HepG2 (cell line): ENCODE measurements at regions of chr2 and their contacts with region 1.

Region 1: DNA sequence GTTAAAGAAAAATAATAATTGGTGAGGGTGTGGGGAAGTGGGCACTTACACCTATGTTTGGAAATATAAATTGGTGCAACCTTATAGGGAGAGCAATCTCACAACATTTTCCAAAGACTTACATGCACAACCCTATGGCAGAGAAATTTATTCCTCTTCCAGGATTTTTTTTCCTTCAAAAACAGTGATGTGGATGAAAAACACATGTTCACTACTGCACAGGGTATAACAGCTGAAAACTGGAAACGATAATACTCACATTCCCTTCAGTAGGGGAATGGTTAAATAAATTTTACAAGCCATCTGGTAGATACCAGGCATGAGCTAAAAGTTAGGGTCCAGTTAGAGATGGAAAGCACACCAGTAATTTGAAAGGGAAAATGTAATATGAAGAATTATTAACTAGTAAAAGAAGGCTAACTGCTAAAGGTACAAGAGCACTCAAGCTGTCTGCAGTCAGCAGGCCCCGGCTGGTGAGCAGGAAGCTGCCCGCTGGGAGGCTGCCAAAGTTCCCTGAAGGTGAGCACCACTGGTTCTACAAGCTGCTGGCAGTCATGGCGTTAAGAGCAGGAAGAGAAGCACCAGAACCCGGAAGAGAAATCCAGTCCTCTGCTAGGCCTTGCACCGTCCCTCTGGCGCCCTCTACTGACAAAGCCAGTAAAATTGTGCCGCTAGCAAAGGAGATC is 28.4 kb upstream of the CASP8 start:
- DNase-seq: peak; percentile 98
- ATAC-seq: peak; percentile 67
- H3K4me3 ChIP-seq: peak overlapping the region; percentile 35 to 98 (median 89); a peak in 5 of 6 replicates
- H3K27ac ChIP-seq: peak overlapping the region; percentile 78
- H3K4me1 ChIP-seq: peaks cover 36% of the 10 kb centered on the region
- H3K27me3 ChIP-seq: no peaks in the 10 kb centered on the region; a peak in 1 of 5 replicates
- CTCF ChIP-seq: peak; percentile 99
- EP300 ChIP-seq: peak in 1 of 2 experiments; percentile 62; a peak in 3 of 4 replicates
- POLR2A ChIP-seq: peak; percentile 74 to 75
- RAD21 ChIP-seq: peak; percentile 98

Region 2: DNA sequence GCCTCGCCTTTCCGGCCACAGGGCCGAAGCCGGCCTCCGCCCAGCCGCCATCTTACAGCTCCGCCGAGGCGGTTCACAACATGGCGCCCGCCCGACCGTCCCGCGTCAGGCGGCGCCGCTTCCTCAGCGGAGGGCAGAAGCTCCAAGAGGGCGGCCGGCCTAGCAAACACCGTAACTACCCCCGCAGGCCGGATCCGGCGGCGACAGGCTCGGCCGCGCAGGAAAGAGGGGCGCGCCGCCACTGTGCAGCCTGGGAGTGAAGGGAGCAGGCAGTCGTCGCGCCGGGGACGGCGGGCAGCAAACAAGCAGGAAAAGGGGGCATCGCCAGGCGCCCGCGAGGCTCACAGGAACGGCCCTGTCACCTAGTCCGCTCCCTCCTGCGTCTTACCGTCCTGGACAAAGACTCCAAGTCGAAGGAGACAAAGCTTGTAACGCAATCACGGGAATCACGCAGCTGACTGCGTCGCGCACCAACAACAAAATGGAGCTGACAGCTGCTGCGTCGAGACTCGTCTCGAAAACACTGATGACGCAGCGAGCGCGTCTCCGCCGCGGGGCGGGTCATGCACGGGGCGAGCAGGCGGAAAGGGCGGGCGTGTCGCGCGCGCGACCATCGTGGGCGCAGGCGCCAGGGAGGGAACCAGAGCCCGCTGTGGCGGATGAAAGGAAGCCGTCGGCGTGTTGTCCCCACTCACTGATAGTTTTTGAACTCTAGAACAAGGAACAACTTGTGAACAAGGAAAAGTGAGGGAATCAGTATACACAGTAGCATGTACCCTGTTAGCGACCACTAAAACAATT is 367.5 kb before region 1 on chr2 and contains the start of gene CLK1:
- CTCF ChIA-PET with region 1: no interaction called
- POLR2A ChIA-PET with region 1: interaction called, 17 read pairs
- in situ Hi-C with region 1: no loop called
- intact Hi-C with region 1: no loop called
- DNase-seq: peak; percentile 89
- ATAC-seq: peak; percentile 80
- H3K4me3 ChIP-seq: peak within 1 kb of the TSS; percentile 91 to 99 (median 97)
- H3K27ac ChIP-seq: peak within 1 kb of the TSS; percentile 98
- H3K4me1 ChIP-seq: peaks cover 55% of the 10 kb centered on the region
- H3K27me3 ChIP-seq: no peaks in the 10 kb centered on the region; a peak in 1 of 5 replicates
- CTCF ChIP-seq: no peak; the same call in 1 of the 2 replicates
- EP300 ChIP-seq: peak; percentile 27 to 54; a peak in 2 of 4 replicates
- POLR2A ChIP-seq: peak; percentile 99 to 100
- RAD21 ChIP-seq: peak; percentile 54
- total RNA-seq, gene CLK1: 35.2 and 66.6 TPM in 2 replicates

Region 3: DNA sequence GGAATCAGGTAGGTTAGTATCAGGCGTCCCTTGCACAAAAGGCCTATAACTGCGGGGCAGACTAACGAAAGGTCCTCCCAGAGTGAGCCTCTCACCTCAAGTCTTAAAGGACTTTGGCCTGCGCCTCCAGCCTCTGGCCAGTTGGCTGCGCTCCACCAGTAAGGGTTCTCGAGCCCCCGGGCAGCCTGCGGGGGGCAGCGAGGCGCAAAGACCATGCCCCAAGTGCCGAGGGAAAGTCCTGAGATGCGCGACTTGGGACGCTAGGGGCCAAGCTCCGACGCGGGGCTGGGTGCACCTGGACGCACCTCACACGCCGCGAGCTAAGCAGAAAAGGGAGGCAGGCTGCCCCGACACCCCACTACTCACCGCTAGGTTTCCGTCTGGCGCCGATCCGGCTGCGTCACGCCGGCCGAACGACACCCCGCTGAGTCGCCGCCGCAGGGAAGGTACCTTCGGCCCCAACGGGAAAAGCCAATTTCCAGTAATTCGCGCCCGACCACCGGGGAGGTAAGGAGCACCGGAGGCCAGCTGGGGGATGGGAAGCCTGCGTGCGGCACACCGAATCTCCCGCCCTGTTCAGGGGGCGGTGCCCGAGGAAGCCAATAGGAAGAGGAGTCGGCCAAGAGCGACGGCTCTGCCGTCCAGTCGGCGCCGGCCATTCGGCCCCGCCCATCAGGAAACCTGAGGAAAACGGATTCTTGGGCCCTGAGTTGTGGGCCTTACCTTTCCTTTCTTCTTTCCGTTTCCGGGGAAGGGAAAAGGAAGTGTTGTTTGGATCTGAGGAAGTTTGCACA is 268.6 kb before region 1 on chr2 and contains the start of gene ORC2:
- CTCF ChIA-PET with region 1: no interaction called
- POLR2A ChIA-PET with region 1: interaction called, 17 read pairs
- in situ Hi-C with region 1: no loop called
- intact Hi-C with region 1: no loop called
- DNase-seq: peak; percentile 96
- ATAC-seq: peak; percentile 96
- H3K4me3 ChIP-seq: peak within 1 kb of the TSS; percentile 79 to 96 (median 86)
- H3K27ac ChIP-seq: peak within 1 kb of the TSS; percentile 85
- H3K4me1 ChIP-seq: peaks cover 52% of the 10 kb centered on the region
- H3K27me3 ChIP-seq: no peaks in the 10 kb centered on the region; a peak in 1 of 5 replicates
- CTCF ChIP-seq: peak; percentile 92
- EP300 ChIP-seq: peak in 1 of 2 experiments; percentile 30; a peak in 2 of 4 replicates
- POLR2A ChIP-seq: peak; percentile 74 to 85
- RAD21 ChIP-seq: peak; percentile 77
- total RNA-seq, gene ORC2: 58.3 and 73.5 TPM in 2 replicates

Region 4: GRCh38 chr2:201182650-201183364 is 49.1 kb before region 1 on chr2 and contains the start of gene CASP10:
- CTCF ChIA-PET with region 1: interaction called, 45 read pairs
- POLR2A ChIA-PET with region 1: interaction called, 138 read pairs
- in situ Hi-C with region 1: loop called (anchors 5 kb)
- intact Hi-C with region 1: loop called (anchors 1 kb)
- DNase-seq: peak; percentile 94
- ATAC-seq: peak; percentile 84
- H3K4me3 ChIP-seq: peak within 1 kb of the TSS; percentile 68 to 95 (median 74)
- H3K27ac ChIP-seq: peak within 1 kb of the TSS; percentile 74
- H3K4me1 ChIP-seq: peaks cover 68% of the 10 kb centered on the region
- H3K27me3 ChIP-seq: no peaks in the 10 kb centered on the region; a peak in 1 of 5 replicates
- CTCF ChIP-seq: peak; percentile 96
- EP300 ChIP-seq: 0 out of 4 replicates have a peak, but pooled peaks of 1 of the 2 experiments have one; percentile 52
- POLR2A ChIP-seq: peak; percentile 70 to 88
- RAD21 ChIP-seq: peak; percentile 83
- total RNA-seq, gene CASP10: 22.2 and 31.1 TPM in 2 replicates

Region 5: GRCh38 chr2:201220102-201220570 is 11.8 kb before region 1 on chr2:
- CTCF ChIA-PET with region 1: no interaction called
- POLR2A ChIA-PET with region 1: interaction called, 21 read pairs
- in situ Hi-C with region 1: no loop called
- intact Hi-C with region 1: no loop called
- DNase-seq: no peak
- ATAC-seq: no peak
- H3K4me3 ChIP-seq: no peak overlapping the region
- H3K27ac ChIP-seq: no peak overlapping the region
- H3K4me1 ChIP-seq: peaks cover 22% of the 10 kb centered on the region
- H3K27me3 ChIP-seq: no peaks in the 10 kb centered on the region
- CTCF ChIP-seq: no peak
- EP300 ChIP-seq: no peak
- POLR2A ChIP-seq: no peak
- RAD21 ChIP-seq: no peak

Region 6: GRCh38 chr2:201327678-201328077 is 95.8 kb after region 1 on chr2:
- CTCF ChIA-PET with region 1: no interaction called
- POLR2A ChIA-PET with region 1: no interaction called
- in situ Hi-C with region 1: no loop called
- intact Hi-C with region 1: no loop called
- DNase-seq: no peak
- ATAC-seq: no peak
- H3K4me3 ChIP-seq: no peak overlapping the region
- H3K27ac ChIP-seq: no peak overlapping the region
- H3K4me1 ChIP-seq: no peaks in the 10 kb centered on the region
- H3K27me3 ChIP-seq: peaks cover 0 to 3% of the 10 kb centered on the region in 2 experiments; a peak in 3 of 5 replicates
- CTCF ChIP-seq: no peak
- EP300 ChIP-seq: no peak
- POLR2A ChIP-seq: no peak
- RAD21 ChIP-seq: no peak

Region 7: GRCh38 chr2:201451292-201452057 is 219.6 kb after region 1 on chr2 and contains the starts of genes STRADB and TRAK2:
- CTCF ChIA-PET with region 1: no interaction called
- POLR2A ChIA-PET with region 1: interaction called, 20 read pairs
- in situ Hi-C with region 1: no loop called
- intact Hi-C with region 1: loop called (anchors 5 kb)
- DNase-seq: peak; percentile 95
- ATAC-seq: peak; percentile 93
- H3K4me3 ChIP-seq: peak within 1 kb of the TSS; percentile 87 to 100 (median 99)
- H3K27ac ChIP-seq: peak within 1 kb of the TSS; percentile 81
- H3K4me1 ChIP-seq: peaks cover 72% of the 10 kb centered on the region
- H3K27me3 ChIP-seq: no peaks in the 10 kb centered on the region; a peak in 2 of 5 replicates
- CTCF ChIP-seq: peak; percentile 41
- EP300 ChIP-seq: peak; percentile 46 to 55; a peak in 1 of 4 replicates
- POLR2A ChIP-seq: peak; percentile 94 to 97
- RAD21 ChIP-seq: peak; percentile 65; the same call in 1 of the 2 replicates
- total RNA-seq, gene STRADB: 66.6 and 73.8 TPM in 2 replicates
- total RNA-seq, gene TRAK2: 21.0 and 32.4 TPM in 2 replicates

Region 8: DNA sequence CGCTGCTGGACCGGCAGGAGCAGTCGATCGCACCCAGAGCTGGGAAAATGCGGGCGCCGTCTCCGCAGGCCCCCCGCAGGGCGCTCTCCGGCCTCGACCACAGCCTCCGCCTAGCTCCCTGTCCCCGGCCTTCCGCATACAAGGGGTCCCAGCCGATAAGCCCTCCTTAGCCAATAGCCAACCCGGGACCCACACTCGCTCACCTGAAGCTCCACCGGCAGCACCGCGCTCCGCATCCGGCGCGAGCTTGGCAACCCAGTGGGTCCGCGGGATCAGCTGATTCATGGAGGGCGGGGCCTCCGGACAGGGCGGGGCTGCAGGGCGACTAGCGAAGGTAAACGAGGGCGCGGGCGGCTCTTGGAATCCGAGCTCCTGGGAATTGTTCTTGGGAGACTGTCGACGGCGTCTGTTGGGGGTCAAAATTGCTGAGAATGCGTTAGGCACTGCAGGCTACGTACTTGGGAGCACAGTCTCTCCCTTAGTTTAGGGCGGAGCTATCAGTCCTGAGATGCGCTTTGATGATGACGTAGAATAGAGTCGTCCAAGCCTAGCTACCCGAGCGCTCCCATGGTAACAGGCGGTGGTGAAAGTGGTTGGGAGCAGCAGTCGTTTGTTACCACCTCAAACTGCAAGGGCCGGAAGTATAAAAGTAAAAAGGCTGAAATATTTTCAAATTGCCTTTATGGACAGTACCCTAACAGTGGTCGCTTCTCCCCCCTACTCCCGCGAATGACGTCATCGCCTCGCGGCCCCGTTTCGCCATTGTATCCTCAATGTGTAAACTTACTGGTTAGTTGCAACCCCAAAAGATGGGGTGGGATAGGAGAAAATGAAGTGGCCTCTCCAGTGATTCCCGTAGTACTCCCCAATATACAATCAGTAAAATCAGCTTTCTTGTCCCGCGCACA is 549.0 kb after region 1 on chr2 and contains the start of gene ALS2:
- CTCF ChIA-PET with region 1: no interaction called
- POLR2A ChIA-PET with region 1: no interaction called
- in situ Hi-C with region 1: no loop called
- intact Hi-C with region 1: loop called (anchors 10 kb)
- DNase-seq: peak; percentile 99
- ATAC-seq: peak; percentile 95
- H3K4me3 ChIP-seq: peak within 1 kb of the TSS; percentile 66 to 95 (median 93)
- H3K27ac ChIP-seq: peak within 1 kb of the TSS; percentile 72
- H3K4me1 ChIP-seq: peaks cover 44% of the 10 kb centered on the region
- H3K27me3 ChIP-seq: no peaks in the 10 kb centered on the region; a peak in 1 of 5 replicates
- CTCF ChIP-seq: 0 out of 2 replicates have a peak, but pooled peaks have one; percentile 4
- EP300 ChIP-seq: peak in 1 of 2 experiments; percentile 77; a peak in 2 of 4 replicates
- POLR2A ChIP-seq: peak; percentile 83 to 93
- RAD21 ChIP-seq: peak; percentile 53
- total RNA-seq, gene ALS2: 19.3 and 25.4 TPM in 2 replicates